Calu3 (cell line): ENCODE measurements at regions of chr3 and their contacts with region 1.

Region 1: DNA sequence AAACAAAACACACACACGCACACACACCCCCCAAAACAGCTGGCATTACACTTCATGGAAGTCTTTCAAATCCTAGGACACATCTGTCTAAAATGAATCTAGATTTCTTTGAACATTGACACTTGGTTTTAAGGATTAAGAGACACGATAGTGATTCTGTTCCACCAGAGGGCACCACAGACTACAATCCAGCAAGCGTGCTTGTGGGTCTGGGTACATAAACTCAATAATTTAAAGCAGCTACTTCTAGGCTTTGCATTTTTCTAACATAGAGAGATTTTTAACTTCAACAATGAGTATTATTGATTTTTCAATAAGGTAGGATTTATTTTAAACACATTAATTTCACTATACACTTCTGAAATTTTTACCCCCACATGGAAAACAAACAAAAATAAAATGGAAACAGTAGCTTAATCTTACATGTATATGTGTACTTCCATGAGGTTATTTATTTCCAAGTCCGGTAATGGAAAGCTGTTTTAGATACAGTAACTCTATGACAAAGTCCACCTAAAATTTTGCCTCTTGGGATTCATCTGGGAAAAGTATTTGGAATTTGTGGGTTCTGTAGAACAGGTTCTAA is 564.0 kb upstream of the TGFBR2 start:
- DNase-seq: peak; percentile 71
- H3K4me3 Mint-ChIP-seq: no peak overlapping the region
- H3K27ac Mint-ChIP-seq: no peak overlapping the region
- H3K4me1 Mint-ChIP-seq: no peaks in the 10 kb centered on the region
- H3K27me3 Mint-ChIP-seq: no peaks in the 10 kb centered on the region
- CTCF ChIP-seq: peak; percentile 23

Region 2: GRCh38 chr3:30098653-30099455 is 56.5 kb after region 1 on chr3:
- CTCF ChIA-PET with region 1: interaction called, 3 read pairs
- intact Hi-C with region 1: loop called (anchors 5 kb)
- DNase-seq: no peak
- H3K4me3 Mint-ChIP-seq: no peak overlapping the region
- H3K27ac Mint-ChIP-seq: peak overlapping the region; percentile 5
- H3K4me1 Mint-ChIP-seq: peaks cover 29% of the 10 kb centered on the region
- H3K27me3 Mint-ChIP-seq: no peaks in the 10 kb centered on the region
- CTCF ChIP-seq: no peak

Region 3: GRCh38 chr3:30199096-30199759 is 156.9 kb after region 1 on chr3:
- CTCF ChIA-PET with region 1: interaction called, 33 read pairs
- intact Hi-C with region 1: loop called (anchors 1 kb)
- DNase-seq: peak; percentile 58
- H3K4me3 Mint-ChIP-seq: no peak overlapping the region
- H3K27ac Mint-ChIP-seq: no peak overlapping the region
- H3K4me1 Mint-ChIP-seq: no peaks in the 10 kb centered on the region
- H3K27me3 Mint-ChIP-seq: no peaks in the 10 kb centered on the region
- CTCF ChIP-seq: peak; percentile 68